WTC11 (cell line): ENCODE measurements at regions of chr7 and their contacts with region 1.

Region 1: DNA sequence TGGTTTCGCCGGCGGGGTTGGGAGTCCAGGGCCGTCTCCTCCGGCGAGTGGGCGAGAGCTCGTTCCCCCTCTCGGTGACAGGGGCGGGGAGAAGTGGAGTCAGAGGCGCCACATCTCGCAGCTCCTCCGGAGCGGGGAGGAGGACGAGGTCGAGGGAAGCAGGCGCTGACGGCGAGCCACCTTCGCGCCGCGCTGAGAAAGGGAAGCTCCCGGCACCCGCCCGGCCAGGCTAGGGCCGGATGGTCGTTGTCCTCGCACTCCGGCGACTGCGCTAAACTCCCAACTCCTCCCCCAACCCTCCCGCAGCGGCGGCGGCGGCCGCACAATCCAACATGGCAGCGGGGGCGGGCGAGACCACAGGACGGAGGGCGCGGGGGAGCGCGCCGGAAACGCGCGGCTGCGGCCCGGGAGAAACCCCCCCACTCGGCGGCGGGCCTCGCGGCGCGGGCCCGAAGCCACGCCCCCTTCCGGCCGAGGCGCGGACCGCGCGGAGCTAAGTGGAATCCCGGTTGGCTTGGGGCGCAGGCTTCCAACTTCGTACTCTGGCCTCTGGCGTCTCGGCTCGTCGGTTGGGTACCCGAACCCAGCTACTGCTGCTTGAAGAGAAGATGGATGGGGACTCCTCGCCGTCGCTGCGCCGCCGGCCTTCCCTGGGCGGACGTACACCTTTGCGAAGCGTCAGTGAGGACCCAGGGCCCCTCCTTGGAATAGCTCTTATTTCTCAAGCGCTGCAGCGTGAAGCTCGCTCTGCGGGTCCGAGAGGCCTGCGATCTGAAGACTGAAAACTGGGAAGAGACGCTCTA is at the start of gene WASL:
- DNase-seq: peak; percentile 93
- ATAC-seq: peak; percentile 83
- H3K4me3 Mint-ChIP-seq: peak within 1 kb of the TSS; percentile 97
- H3K27ac Mint-ChIP-seq: peak within 1 kb of the TSS; percentile 98
- H3K4me1 Mint-ChIP-seq: peaks cover 64% of the 10 kb centered on the region
- H3K27me3 Mint-ChIP-seq: no peaks in the 10 kb centered on the region
- CTCF ChIP-seq: no peak
- total RNA-seq, gene WASL: 29.9 to 34.4 TPM (median 30.0 TPM) in 3 replicates

Region 2: GRCh38 chr7:123643495-123644441 is 105.2 kb before region 1 on chr7:
- CTCF ChIA-PET with region 1: no interaction called
- POLR2A ChIA-PET with region 1: interaction called, 15 read pairs
- DNase-seq: peak; percentile 38
- ATAC-seq: peak; percentile 96
- H3K4me3 Mint-ChIP-seq: peak overlapping the region; percentile 46
- H3K27ac Mint-ChIP-seq: peak overlapping the region; percentile 65
- H3K4me1 Mint-ChIP-seq: peaks cover 49% of the 10 kb centered on the region
- H3K27me3 Mint-ChIP-seq: no peaks in the 10 kb centered on the region
- CTCF ChIP-seq: no peak

Region 3: GRCh38 chr7:123692471-123692877 is 56.5 kb before region 1 on chr7:
- CTCF ChIA-PET with region 1: interaction called, 3 read pairs
- POLR2A ChIA-PET with region 1: interaction called, 16 read pairs
- DNase-seq: peak; percentile 77
- ATAC-seq: peak; percentile 100
- H3K4me3 Mint-ChIP-seq: peak overlapping the region; percentile 33
- H3K27ac Mint-ChIP-seq: peak overlapping the region; percentile 84
- H3K4me1 Mint-ChIP-seq: peaks cover 25% of the 10 kb centered on the region
- H3K27me3 Mint-ChIP-seq: no peaks in the 10 kb centered on the region
- CTCF ChIP-seq: no peak

Region 4: DNA sequence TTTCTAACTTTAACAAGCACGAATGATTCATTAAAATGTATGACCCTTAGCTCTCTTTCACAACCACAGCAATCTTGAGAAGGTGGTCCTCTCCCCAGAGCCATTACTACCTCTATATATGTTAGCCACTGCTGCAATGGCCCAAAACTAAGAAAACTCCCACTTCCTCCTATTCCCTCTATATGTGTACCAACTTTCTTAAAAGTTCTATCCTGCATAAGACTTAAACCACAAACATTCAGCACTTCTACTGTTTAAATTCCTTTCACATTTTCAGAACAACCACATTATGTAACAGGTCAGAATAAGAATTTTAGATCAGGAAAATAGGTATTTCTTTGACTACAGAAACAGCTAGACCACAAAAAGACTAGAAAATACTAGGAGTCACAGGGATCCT is 36.3 kb before region 1 on chr7:
- CTCF ChIA-PET with region 1: interaction called, 12 read pairs
- POLR2A ChIA-PET with region 1: no interaction called
- DNase-seq: no peak
- ATAC-seq: no peak
- H3K4me3 Mint-ChIP-seq: no peak overlapping the region
- H3K27ac Mint-ChIP-seq: 0 out of 2 replicates have a peak overlapping the region, but pooled peaks have one; percentile 6
- H3K4me1 Mint-ChIP-seq: peaks cover 36% of the 10 kb centered on the region
- H3K27me3 Mint-ChIP-seq: no peaks in the 10 kb centered on the region
- CTCF ChIP-seq: no peak